ENCODE measurements at regions of chr10 and their contacts with region 1.

Region 1: DNA sequence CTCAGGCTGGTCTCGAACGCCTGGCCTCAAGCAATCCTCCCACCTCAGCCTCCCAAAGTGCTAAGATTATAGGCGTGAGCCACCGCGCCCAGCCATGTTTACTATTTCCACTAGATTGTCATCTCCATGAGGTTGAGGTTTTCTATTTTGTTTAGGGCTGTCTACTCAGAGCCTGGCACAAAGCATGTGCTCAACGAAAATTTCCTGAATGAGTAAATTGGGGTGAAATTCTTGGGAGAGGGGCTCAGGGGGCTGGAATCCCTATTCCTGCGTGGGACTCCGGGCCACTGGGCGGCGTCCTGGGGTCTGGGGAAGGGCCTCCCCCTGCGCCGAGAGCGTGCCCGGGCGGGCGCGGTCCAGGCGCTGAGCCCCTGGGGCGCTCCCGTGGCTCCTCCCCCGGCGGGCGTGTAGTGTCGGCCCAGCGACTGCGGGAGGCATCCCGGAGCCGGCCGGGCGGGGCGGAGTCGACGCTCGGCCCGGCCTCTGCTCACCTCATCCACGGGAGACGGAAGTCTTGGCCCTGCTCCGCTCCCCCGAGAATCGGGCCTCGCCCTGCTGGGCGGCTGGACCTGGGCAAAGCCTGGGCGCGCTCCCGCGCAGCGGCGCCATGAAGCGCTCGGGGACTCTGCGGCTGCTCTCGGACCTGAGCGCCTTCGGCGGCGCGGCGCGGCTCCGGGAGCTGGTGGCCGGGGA is at the start of gene HPS6:
- DNase-seq: peak; percentile 55 to 94
- H3K4me3 ChIP-seq: peak within 1 kb of the TSS; percentile 76 to 94
- H3K27ac ChIP-seq: peak within 1 kb of the TSS; percentile 89 to 93
- H3K4me1 ChIP-seq: peaks cover 16 to 23% of the 10 kb centered on the region in 2 donors
- H3K27me3 ChIP-seq: no peaks in the 10 kb centered on the region
- CTCF ChIP-seq: peak in 2 of 3 experiments; percentile 14 to 33
- total RNA-seq, gene HPS6: 39.9 TPM

Region 2: GRCh38 chr10:102114861-102115618 is 50.0 kb after region 1 on chr10:
- intact Hi-C with region 1: loop called (anchors 2 kb)
- DNase-seq: peak; percentile 76 to 93
- H3K4me3 ChIP-seq: peak overlapping the region; percentile 69 to 84
- H3K27ac ChIP-seq: peak overlapping the region; percentile 71 to 100
- H3K4me1 ChIP-seq: peaks cover 33 to 53% of the 10 kb centered on the region in 2 donors
- H3K27me3 ChIP-seq: no peaks in the 10 kb centered on the region
- CTCF ChIP-seq: no peak